Activated B cell treated with CpG ODN at 0.5 μM for 24 hours (primary cell): ENCODE measurements at regions of chr12 and their contacts with region 1.

Region 1: GRCh38 chr12:96194971-96195844 is 1.0 kb downstream of the ELK3 start:
- DNase-seq: peak; percentile 45
- ATAC-seq: peak; percentile 57
- H3K4me3 Mint-ChIP-seq: peak overlapping the region; percentile 99
- H3K27ac Mint-ChIP-seq: peak overlapping the region; percentile 99
- H3K4me1 Mint-ChIP-seq: peaks cover 72% of the 10 kb centered on the region
- H3K27me3 Mint-ChIP-seq: no peaks in the 10 kb centered on the region
- CTCF ChIP-seq: no peak

Region 2: DNA sequence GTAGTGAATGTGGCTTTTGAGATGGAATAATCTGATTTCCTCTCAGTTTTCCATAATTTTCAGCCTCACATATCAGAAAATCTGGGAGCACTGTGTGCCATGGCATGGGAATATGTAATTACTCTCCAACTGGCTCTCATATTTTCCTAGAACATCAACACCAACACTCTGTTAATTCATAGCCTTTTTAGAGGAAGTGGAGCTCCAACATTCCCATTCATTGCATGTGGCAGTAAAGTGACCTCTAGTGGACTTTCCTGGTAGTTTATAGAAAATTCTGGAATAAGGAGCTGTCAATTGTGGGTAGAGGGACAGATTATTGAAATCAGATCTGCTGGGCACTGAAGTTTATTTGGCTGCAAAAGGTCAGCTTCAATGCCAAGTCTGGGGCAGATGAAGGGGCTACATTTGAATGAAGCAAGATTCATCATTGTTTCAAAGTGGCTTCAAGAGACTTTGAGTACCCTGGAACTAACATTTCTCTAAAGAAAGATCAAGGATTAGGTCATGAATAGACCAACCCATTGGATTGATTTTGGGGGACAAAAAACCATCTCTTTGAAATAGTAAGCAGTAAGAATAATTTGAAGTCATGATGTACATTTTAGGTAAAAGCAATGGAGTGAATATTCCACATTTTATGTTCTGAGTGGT is 620.3 kb before region 1 on chr12:
- CTCF ChIA-PET with region 1: no interaction called
- POLR2A ChIA-PET with region 1: no interaction called
- intact Hi-C with region 1: loop called (anchors 10 kb)
- DNase-seq: no peak
- ATAC-seq: no peak
- H3K4me3 Mint-ChIP-seq: peak overlapping the region; percentile 85
- H3K27ac Mint-ChIP-seq: peak overlapping the region; percentile 97
- H3K4me1 Mint-ChIP-seq: peaks cover 49% of the 10 kb centered on the region
- H3K27me3 Mint-ChIP-seq: peaks cover 2% of the 10 kb centered on the region
- CTCF ChIP-seq: no peak

Region 3: DNA sequence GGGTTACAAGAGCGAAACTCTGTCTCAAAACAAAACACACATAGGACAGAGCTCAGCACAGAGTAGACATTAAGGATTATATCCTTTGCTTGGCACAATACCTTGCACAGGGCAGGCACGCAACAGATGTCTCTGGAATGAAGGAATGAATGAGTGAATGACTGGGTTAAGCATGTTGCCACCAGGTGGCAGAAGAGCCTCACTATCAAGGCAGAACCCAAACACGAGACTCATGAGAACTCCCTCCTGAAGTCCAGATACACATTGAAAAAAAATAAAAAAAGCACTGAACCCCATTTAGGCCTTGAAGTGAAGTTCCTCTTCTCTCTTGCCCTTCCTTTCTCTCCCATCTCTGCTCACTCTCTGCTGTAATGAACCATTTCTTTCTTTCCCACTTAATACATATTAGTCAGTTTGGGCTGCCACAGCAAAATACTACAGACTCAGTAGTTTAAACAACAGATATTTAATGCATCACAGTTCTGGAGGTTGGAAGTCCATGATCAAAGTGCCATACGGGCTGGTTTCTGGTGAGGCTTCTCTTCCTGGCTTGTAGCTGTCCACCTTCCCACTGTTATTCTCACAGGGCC is 133.2 kb before region 1 on chr12:
- CTCF ChIA-PET with region 1: interaction called, 3 read pairs
- POLR2A ChIA-PET with region 1: interaction called, 4 read pairs
- intact Hi-C with region 1: loop called (anchors 1 kb)
- DNase-seq: peak; percentile 37
- ATAC-seq: peak; percentile 92
- H3K4me3 Mint-ChIP-seq: no peak overlapping the region
- H3K27ac Mint-ChIP-seq: peak overlapping the region; percentile 71
- H3K4me1 Mint-ChIP-seq: peaks cover 31% of the 10 kb centered on the region
- H3K27me3 Mint-ChIP-seq: no peaks in the 10 kb centered on the region
- CTCF ChIP-seq: no peak

Region 4: DNA sequence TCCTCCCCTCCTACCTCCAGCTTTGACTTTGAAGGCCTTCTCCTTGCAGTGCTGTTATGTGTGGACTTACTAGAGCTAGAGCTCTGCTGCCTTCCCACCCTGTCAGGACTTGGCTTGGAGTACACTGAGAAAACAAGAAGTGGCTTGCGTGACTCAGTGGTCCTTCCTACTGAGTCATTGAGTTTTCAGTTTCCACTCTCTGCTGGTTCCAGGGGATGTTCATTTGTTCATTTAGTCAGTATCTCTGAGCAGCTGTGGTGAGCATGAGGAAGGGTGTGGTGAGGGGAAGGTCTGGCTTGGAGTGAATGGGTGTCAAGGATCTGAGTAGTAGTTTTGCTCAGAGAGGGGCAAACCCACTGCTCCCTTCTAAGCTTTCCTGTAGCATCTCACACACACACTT is 18.2 kb before region 1 on chr12:
- CTCF ChIA-PET with region 1: no interaction called
- POLR2A ChIA-PET with region 1: interaction called, 10 read pairs
- intact Hi-C with region 1: loop called (anchors 1 kb)
- DNase-seq: no peak
- ATAC-seq: peak; percentile 85
- H3K4me3 Mint-ChIP-seq: peak overlapping the region; percentile 2
- H3K27ac Mint-ChIP-seq: peak overlapping the region; percentile 82
- H3K4me1 Mint-ChIP-seq: peaks cover 13% of the 10 kb centered on the region
- H3K27me3 Mint-ChIP-seq: no peaks in the 10 kb centered on the region
- CTCF ChIP-seq: no peak

Region 5: GRCh38 chr12:96489103-96490056 is 294.2 kb after region 1 on chr12 and contains the start of gene CFAP54:
- CTCF ChIA-PET with region 1: no interaction called
- POLR2A ChIA-PET with region 1: no interaction called
- intact Hi-C with region 1: loop called (anchors 2 kb)
- DNase-seq: peak; percentile 91
- ATAC-seq: peak; percentile 90
- H3K4me3 Mint-ChIP-seq: peak within 1 kb of the TSS; percentile 90
- H3K27ac Mint-ChIP-seq: peak within 1 kb of the TSS; percentile 82
- H3K4me1 Mint-ChIP-seq: peaks cover 22% of the 10 kb centered on the region
- H3K27me3 Mint-ChIP-seq: no peaks in the 10 kb centered on the region
- CTCF ChIP-seq: peak; percentile 65
- total RNA-seq, gene CFAP54: 0.44 and 0.64 TPM in 2 replicates